ENCODE measurements at regions of chr17 and their contacts with region 1.

Region 1: GRCh38 chr17:20266806-20267458 is 200.4 kb downstream of the LGALS9B start:
- DNase-seq: peak; percentile 33
- H3K4me3 Mint-ChIP-seq: no peak overlapping the region
- H3K27ac Mint-ChIP-seq: peak overlapping the region; percentile 63
- H3K4me1 Mint-ChIP-seq: peaks cover 76% of the 10 kb centered on the region
- H3K27me3 Mint-ChIP-seq: no peaks in the 10 kb centered on the region

Region 2: GRCh38 chr17:20155258-20156195 is 111.4 kb before region 1 on chr17:
- CTCF ChIA-PET with region 1: no interaction called
- intact Hi-C with region 1: loop called (anchors 2 kb)
- DNase-seq: peak; percentile 98
- H3K4me3 Mint-ChIP-seq: no peak overlapping the region
- H3K27ac Mint-ChIP-seq: no peak overlapping the region
- H3K4me1 Mint-ChIP-seq: peaks cover 7% of the 10 kb centered on the region
- H3K27me3 Mint-ChIP-seq: peaks cover 8% of the 10 kb centered on the region

Region 3: GRCh38 chr17:20244671-20245070 is 22.3 kb before region 1 on chr17:
- CTCF ChIA-PET with region 1: interaction called, 3 read pairs
- intact Hi-C with region 1: loop called (anchors 2 kb)
- DNase-seq: no peak
- H3K4me3 Mint-ChIP-seq: no peak overlapping the region
- H3K27ac Mint-ChIP-seq: no peak overlapping the region
- H3K4me1 Mint-ChIP-seq: peaks cover 45% of the 10 kb centered on the region
- H3K27me3 Mint-ChIP-seq: no peaks in the 10 kb centered on the region

Region 4: GRCh38 chr17:20254541-20254940 is 12.4 kb before region 1 on chr17:
- CTCF ChIA-PET with region 1: interaction called, 3 read pairs
- intact Hi-C with region 1: loop called (anchors 2 kb)
- DNase-seq: no peak
- H3K4me3 Mint-ChIP-seq: no peak overlapping the region
- H3K27ac Mint-ChIP-seq: no peak overlapping the region
- H3K4me1 Mint-ChIP-seq: peaks cover 46% of the 10 kb centered on the region
- H3K27me3 Mint-ChIP-seq: no peaks in the 10 kb centered on the region

Region 5: GRCh38 chr17:20278805-20279204 is 11.9 kb after region 1 on chr17:
- CTCF ChIA-PET with region 1: interaction called, 3 read pairs
- intact Hi-C with region 1: loop called (anchors 2 kb)
- DNase-seq: no peak
- H3K4me3 Mint-ChIP-seq: no peak overlapping the region
- H3K27ac Mint-ChIP-seq: no peak overlapping the region
- H3K4me1 Mint-ChIP-seq: peaks cover 75% of the 10 kb centered on the region
- H3K27me3 Mint-ChIP-seq: no peaks in the 10 kb centered on the region

Measured in activated naive CD4-positive, alpha-beta T cell treated with anti-CD3 and anti-CD28 coated beads for 36 hours (primary cell).